RWPE1 (cell line): ENCODE measurements at regions of chr1 and their contacts with region 1.

Region 1: DNA sequence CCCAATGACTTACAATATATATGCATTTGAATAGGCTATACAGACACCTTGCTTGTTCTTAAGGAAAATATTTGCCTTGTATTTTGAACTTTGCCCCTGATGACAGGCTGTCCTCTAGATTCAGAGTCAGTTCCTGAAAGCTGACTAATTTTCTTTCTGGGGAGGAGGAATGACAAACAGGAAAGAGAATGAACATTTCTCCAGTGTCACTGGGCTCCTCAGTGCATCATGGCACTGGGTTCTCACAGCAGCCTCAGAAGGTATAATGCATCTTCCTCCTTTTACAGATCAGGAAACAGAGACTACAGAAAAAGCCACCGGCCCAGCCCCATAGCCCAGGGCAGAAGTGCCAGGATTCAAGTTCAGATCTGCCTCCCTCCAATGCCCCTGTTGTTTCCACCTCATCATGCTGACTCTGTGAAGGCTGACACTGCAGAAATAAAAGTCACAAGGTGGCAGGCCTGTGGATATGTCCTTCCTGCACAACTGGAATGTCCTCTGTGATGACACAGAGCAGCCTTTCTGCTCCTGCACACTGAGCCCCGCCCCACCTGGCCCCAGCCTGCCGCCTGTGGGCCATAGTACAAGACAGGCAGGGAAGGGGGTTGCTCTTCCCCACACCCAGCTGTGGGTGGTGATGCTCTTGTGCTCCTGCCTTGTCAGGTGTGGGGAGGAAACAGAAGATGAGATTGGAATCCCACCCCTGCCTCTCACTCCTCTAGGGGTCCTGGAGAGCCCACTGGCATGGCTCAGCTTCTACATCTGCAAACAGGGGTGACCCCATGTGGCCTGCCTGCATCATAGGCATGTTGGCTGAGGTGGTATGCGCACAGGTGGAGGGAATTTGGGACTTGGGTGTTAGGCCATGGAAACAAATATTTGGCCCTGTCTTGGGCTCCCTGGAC is 6.4 kb downstream of the TTC22 start:
- DNase-seq: no peak
- H3K27ac ChIP-seq: peak overlapping the region; percentile 30
- CTCF ChIP-seq: no peak

Region 2: DNA sequence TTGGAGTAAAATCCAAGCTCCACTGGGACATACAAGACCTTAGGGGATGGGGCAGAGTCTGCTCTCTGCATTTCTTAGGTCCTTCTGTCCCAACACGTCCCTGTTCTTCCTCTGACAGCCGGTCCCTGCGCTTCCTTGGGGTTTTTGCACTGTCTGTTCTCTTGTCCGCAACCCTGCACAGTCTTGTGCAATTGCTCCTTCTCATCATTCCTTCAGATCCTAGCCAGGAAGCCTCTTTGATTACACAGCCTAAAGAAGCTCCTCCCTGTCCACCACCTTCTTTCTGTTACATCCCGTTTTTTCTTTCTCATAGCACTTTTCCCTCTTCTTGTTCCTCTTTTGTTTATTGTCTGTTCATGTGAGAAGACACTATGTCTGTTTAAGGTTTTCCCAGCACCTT is 226.7 kb before region 1 on chr1:
- CTCF ChIA-PET with region 1: no interaction called
- POLR2A ChIA-PET with region 1: interaction called, 15 read pairs
- DNase-seq: peak; percentile 50
- H3K27ac ChIP-seq: peak overlapping the region; percentile 78
- CTCF ChIP-seq: no peak